IMR-90 (cell line): ENCODE measurements at regions of chr2 and their contacts with region 1.

Region 1: DNA sequence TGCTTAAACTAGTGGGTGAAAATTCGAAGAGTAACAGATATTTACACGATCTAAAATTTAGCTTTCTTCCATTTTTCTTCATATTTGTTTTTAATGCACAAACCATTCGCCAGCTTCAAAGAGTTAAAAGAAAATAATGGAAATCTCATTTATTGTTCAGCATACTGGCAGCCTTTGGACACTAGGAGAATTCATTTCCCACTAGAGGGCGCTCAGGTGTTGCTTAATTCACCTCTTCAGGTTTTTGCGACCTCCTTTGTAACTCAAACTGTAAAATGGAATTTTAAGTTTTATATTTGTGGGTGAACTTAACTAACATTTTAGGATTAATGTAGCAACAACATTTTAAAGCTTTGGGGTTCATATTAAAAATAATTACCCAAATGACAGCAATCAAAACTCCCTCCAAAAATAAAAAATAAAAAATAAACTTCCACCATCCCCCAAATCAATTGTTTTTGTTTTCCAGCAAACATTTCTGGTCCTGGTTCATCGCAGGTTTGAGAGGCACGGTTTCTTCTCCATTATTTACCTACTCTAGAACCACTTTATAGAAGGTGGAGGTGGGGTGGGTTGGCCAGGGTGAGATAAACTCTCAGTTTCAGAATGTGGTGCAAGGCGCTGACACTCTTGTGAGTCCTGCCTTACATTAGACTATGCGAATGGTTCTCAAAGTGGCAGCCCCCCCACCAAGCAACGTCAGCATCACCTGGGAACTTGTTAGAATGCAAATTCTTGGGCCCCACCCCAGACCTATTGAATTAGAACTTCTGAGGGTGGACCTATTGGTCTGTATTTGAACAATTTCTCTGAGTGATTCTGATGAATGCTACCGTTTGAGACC is 24.7 kb upstream of the PNPT1 start:
- DNase-seq: peak; percentile 71
- ATAC-seq: peak; percentile 81
- H3K4me3 ChIP-seq: no peak overlapping the region
- H3K27ac ChIP-seq: no peak overlapping the region
- H3K4me1 ChIP-seq: peaks cover 4% of the 10 kb centered on the region; the same call in 1 of the 2 replicates
- H3K27me3 ChIP-seq: no peaks in the 10 kb centered on the region
- CTCF ChIP-seq: peak; percentile 95
- POLR2A ChIP-seq: 0 out of 2 replicates have a peak, but pooled peaks have one; percentile 34
- RAD21 ChIP-seq: peak; percentile 91

Region 2: DNA sequence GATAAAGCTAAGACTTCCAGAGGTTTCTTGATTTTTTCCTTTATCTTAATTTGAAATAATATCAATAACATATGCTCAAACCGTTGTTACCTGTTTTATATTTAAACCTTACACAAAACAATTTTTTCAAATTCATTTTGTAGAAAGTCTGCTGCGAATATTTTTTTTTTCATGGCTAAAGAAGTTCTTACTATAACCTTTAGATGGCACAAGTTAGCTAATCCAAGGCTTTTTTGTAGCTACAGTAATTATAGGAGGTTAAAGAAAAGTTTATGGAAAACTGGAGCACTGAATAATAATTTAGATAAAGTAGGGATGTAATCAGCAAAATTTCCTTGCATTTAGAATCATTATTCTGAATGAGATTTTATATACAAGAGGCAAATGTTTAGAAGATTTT is 53.2 kb after region 1 on chr2:
- CTCF ChIA-PET with region 1: interaction called, 11 read pairs
- POLR2A ChIA-PET with region 1: no interaction called
- dilution Hi-C with region 1: no loop called
- in situ Hi-C with region 1: no loop called
- intact Hi-C with region 1: loop called (anchors 2 kb)
- DNase-seq: peak; percentile 67
- ATAC-seq: peak; percentile 79
- H3K4me3 ChIP-seq: no peak overlapping the region
- H3K27ac ChIP-seq: no peak overlapping the region
- H3K4me1 ChIP-seq: peaks cover 5% of the 10 kb centered on the region
- H3K27me3 ChIP-seq: no peaks in the 10 kb centered on the region
- CTCF ChIP-seq: peak; percentile 91
- POLR2A ChIP-seq: no peak
- RAD21 ChIP-seq: peak; percentile 90

Region 3: GRCh38 chr2:55862673-55863390 is 144.4 kb after region 1 on chr2:
- CTCF ChIA-PET with region 1: interaction called, 4 read pairs
- POLR2A ChIA-PET with region 1: no interaction called
- dilution Hi-C with region 1: no loop called
- in situ Hi-C with region 1: no loop called
- intact Hi-C with region 1: loop called (anchors 10 kb)
- DNase-seq: peak; percentile 100
- ATAC-seq: peak; percentile 89
- H3K4me3 ChIP-seq: no peak overlapping the region
- H3K27ac ChIP-seq: peak overlapping the region; percentile 100
- H3K4me1 ChIP-seq: peaks cover 16% of the 10 kb centered on the region
- H3K27me3 ChIP-seq: no peaks in the 10 kb centered on the region
- CTCF ChIP-seq: no peak
- POLR2A ChIP-seq: peak; percentile 8; the same call in 1 of the 2 replicates
- RAD21 ChIP-seq: no peak

Region 4: GRCh38 chr2:55961318-55961911 is 243.0 kb after region 1 on chr2:
- CTCF ChIA-PET with region 1: interaction called, 7 read pairs
- POLR2A ChIA-PET with region 1: no interaction called
- dilution Hi-C with region 1: no loop called
- in situ Hi-C with region 1: no loop called
- intact Hi-C with region 1: loop called (anchors 1 kb)
- DNase-seq: peak; percentile 66
- ATAC-seq: peak; percentile 73
- H3K4me3 ChIP-seq: no peak overlapping the region
- H3K27ac ChIP-seq: no peak overlapping the region
- H3K4me1 ChIP-seq: peaks cover 8% of the 10 kb centered on the region
- H3K27me3 ChIP-seq: no peaks in the 10 kb centered on the region
- CTCF ChIP-seq: peak; percentile 71
- POLR2A ChIP-seq: no peak
- RAD21 ChIP-seq: peak; percentile 74

Region 5: DNA sequence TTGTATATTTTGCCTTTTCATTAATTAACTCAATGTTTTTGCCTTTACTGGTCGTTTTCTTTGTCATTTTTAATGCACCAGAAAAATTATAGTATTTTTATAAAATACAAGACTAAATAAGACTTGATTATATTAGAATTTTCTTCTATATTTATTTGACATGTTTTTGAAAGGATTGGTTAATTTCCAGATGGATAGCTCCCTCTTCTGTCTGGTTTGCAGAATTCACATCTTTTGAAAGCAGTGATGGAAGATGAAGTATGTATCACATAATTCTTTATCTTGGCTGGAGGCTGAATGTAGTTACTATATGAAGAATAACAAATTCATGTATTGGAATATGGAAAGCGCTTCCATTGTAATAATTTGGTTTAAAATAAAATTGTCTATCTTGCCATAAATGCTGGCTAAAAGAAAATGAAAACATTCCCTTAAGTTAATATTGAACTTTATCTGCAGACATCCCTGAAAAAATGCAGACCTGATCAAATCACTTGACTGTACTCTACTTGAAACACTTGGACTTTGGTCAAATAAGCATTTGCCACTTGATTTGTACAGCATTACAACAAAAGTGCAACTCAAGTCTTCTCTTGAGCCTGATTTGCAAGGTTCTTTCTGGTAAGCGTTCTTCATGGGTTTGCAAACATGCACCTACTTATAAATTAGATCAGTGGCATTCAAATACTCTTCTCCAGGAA is 291.5 kb after region 1 on chr2:
- CTCF ChIA-PET with region 1: interaction called, 8 read pairs
- POLR2A ChIA-PET with region 1: no interaction called
- dilution Hi-C with region 1: loop called (anchors 25 kb)
- in situ Hi-C with region 1: no loop called
- intact Hi-C with region 1: loop called (anchors 1 kb)
- DNase-seq: peak; percentile 70
- ATAC-seq: no peak
- H3K4me3 ChIP-seq: no peak overlapping the region
- H3K27ac ChIP-seq: no peak overlapping the region
- H3K4me1 ChIP-seq: peaks cover 3% of the 10 kb centered on the region
- H3K27me3 ChIP-seq: no peaks in the 10 kb centered on the region
- CTCF ChIP-seq: peak; percentile 84
- POLR2A ChIP-seq: no peak
- RAD21 ChIP-seq: peak; percentile 85

Region 6: GRCh38 chr2:56132138-56132537 is 413.8 kb after region 1 on chr2:
- CTCF ChIA-PET with region 1: interaction called, 5 read pairs
- POLR2A ChIA-PET with region 1: no interaction called
- dilution Hi-C with region 1: no loop called
- in situ Hi-C with region 1: loop called (anchors 10 kb)
- intact Hi-C with region 1: loop called (anchors 1 kb)
- DNase-seq: peak; percentile 47
- ATAC-seq: peak; percentile 51; the same call in 1 of the 2 replicates
- H3K4me3 ChIP-seq: no peak overlapping the region
- H3K27ac ChIP-seq: no peak overlapping the region
- H3K4me1 ChIP-seq: no peaks in the 10 kb centered on the region
- H3K27me3 ChIP-seq: 0 out of 2 replicates have a peak, but pooled peaks cover 2% of the 10 kb centered on the region
- CTCF ChIP-seq: peak; percentile 69
- POLR2A ChIP-seq: no peak
- RAD21 ChIP-seq: peak; percentile 66

Region 7: DNA sequence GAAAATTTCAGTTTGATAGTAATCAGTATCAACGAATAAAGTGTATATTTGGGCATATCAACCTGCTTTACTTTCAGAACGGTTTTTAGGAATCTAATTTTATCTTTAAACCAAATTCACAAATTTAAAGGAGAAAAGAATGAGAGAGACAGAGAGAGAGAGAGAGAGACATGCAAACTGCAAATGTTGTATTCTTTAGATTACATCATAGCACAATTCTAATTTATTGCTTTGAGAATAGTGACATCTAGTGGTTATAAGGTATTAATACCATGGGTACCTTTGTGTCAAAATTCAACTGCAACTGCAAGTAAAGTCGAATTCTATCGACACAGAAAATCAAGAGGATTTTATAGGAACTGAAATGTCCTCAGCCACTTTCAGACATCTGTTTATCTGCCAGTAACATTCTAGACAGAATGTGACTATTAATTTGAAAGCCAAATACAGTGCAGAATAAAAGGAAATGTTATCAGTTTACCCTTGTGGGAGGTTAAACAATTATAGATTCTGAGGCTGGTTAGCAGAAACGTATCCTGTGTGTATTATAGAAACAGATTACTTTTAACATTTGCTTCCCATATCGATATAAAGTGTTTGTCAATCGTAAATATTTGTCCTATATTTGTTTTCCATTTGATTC is 1798.4 kb after region 1 on chr2:
- CTCF ChIA-PET with region 1: no interaction called
- POLR2A ChIA-PET with region 1: no interaction called
- dilution Hi-C with region 1: no loop called
- in situ Hi-C with region 1: loop called (anchors 25 kb)
- intact Hi-C with region 1: no loop called
- DNase-seq: peak; percentile 47
- ATAC-seq: peak; percentile 53
- H3K4me3 ChIP-seq: no peak overlapping the region
- H3K27ac ChIP-seq: no peak overlapping the region
- H3K4me1 ChIP-seq: no peaks in the 10 kb centered on the region
- H3K27me3 ChIP-seq: no peaks in the 10 kb centered on the region
- CTCF ChIP-seq: peak; percentile 60
- POLR2A ChIP-seq: no peak
- RAD21 ChIP-seq: peak; percentile 67